PC-9 (cell line): ENCODE measurements at regions of chr17 and their contacts with region 1.

Region 1: GRCh38 chr17:31015639-31016038 is 44.8 kb downstream of the RNF135 start:
- DNase-seq: no peak
- H3K4me3 ChIP-seq: no peak overlapping the region
- H3K27ac ChIP-seq: no peak overlapping the region
- H3K4me1 ChIP-seq: no peaks in the 10 kb centered on the region
- H3K27me3 ChIP-seq: no peaks in the 10 kb centered on the region
- CTCF ChIP-seq: no peak

Region 2: GRCh38 chr17:30961209-30962188 is 54.1 kb before region 1 on chr17:
- CTCF ChIA-PET with region 1: no interaction called
- POLR2A ChIA-PET with region 1: no interaction called
- intact Hi-C with region 1: no loop called
- DNase-seq: no peak
- H3K4me3 ChIP-seq: no peak overlapping the region
- H3K27ac ChIP-seq: no peak overlapping the region
- H3K4me1 ChIP-seq: no peaks in the 10 kb centered on the region
- H3K27me3 ChIP-seq: no peaks in the 10 kb centered on the region
- CTCF ChIP-seq: no peak

Region 3: DNA sequence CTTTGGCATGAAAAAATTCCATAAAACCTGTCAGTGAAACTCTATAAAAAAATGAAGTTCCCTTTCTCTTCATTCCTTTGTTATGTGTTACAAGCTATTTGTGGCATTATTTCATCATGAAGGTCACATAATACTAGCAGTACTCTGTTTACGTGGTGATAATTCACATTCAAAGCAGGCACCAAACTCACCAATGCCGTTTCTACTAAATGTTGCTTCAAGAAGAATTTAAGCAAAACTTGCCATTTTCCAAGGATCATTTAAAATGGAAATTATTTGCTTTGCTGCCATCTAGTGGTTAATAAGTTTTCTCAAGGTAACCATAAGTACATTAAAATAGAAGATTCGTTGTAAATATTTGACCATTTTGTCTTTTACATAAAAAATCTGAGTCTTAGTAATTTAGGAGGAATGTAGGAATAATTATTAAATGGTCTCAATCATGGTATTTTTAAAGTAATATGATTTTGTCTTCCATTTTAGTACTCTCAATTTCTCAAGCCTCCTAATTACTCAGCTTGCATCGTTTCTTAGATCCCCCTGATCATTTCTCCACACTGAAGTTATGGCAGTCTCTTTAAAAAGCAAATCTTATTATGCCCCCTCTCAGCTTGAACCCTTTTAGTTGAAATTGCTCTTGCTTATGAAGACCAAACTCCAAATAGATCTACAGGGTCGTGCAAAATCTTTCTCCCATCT is 200.6 kb after region 1 on chr17:
- CTCF ChIA-PET with region 1: interaction called, 3 read pairs
- POLR2A ChIA-PET with region 1: no interaction called
- intact Hi-C with region 1: loop called (anchors 2 kb)
- DNase-seq: peak in 1 of 2 experiments; percentile 53
- H3K4me3 ChIP-seq: no peak overlapping the region
- H3K27ac ChIP-seq: no peak overlapping the region
- H3K4me1 ChIP-seq: no peaks in the 10 kb centered on the region
- H3K27me3 ChIP-seq: no peaks in the 10 kb centered on the region
- CTCF ChIP-seq: peak; percentile 85

Region 4: DNA sequence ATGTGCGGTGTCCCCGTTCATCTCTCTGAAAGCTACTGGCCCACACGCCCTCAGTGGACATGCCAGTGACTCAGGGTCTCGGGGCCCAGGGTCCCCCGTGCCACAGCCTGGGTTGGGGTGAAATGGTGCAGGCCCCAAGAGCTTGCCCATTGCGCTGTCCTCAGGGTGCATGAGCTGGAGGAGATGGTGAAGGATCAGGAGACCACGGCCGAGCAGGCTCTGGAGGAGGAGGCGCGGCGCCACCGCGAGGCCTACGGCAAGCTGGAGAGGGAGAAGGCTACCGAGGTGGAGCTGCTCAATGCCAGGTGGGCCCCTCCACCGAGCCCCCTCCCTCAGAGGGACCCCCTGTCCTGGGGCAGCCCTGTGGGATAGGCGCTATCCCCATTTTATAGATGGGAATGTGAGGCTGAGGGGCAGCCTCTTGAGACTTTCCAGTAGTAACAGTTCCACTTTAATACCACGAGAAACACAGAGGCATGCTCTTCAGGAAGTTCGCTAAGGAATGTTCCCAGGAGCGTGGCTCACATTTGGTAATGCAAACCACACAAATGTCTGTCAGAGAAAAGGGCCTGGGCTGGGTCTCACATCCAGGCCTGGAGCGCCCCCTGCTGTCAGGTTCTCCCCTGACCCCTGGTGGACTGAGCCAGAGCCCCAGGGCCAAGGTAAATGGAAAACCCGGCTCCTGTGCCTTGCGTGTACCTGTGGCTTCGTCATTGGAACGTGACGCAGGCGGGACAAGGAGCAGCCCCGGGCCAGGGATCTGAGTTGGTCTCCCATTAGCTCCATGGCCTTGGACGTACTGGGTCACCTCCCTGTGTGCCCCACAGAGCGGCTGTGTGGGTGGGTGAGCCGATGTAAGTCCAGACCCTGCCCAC is 509.5 kb after region 1 on chr17:
- CTCF ChIA-PET with region 1: no interaction called
- POLR2A ChIA-PET with region 1: no interaction called
- intact Hi-C with region 1: loop called (anchors 10 kb)
- DNase-seq: peak; percentile 85 to 88
- H3K4me3 ChIP-seq: no peak overlapping the region
- H3K27ac ChIP-seq: no peak overlapping the region
- H3K4me1 ChIP-seq: peaks cover 5% of the 10 kb centered on the region; the same call in 1 of the 2 replicates
- H3K27me3 ChIP-seq: no peaks in the 10 kb centered on the region
- CTCF ChIP-seq: peak; percentile 94